CD8-positive, alpha-beta memory T cell (primary cell): ENCODE measurements at regions of chr19 and their contacts with region 1.

Region 1: GRCh38 chr19:18251587-18252369 is 22.5 kb downstream of the IQCN start:
- DNase-seq: peak; percentile 66 to 85 (median 72)
- H3K4me3 ChIP-seq: no peak overlapping the region
- H3K4me3 Mint-ChIP-seq: no peak overlapping the region
- H3K27ac ChIP-seq: no peak overlapping the region
- H3K27ac Mint-ChIP-seq: no peak overlapping the region
- H3K4me1 ChIP-seq: no peaks in the 10 kb centered on the region
- H3K4me1 Mint-ChIP-seq: peaks cover 0 to 1% (median 0%) of the 10 kb centered on the region in 3 donors
- H3K27me3 ChIP-seq: peaks cover 8% of the 10 kb centered on the region
- H3K27me3 Mint-ChIP-seq: peaks cover 14 to 25% of the 10 kb centered on the region in 2 donors

Region 2: DNA sequence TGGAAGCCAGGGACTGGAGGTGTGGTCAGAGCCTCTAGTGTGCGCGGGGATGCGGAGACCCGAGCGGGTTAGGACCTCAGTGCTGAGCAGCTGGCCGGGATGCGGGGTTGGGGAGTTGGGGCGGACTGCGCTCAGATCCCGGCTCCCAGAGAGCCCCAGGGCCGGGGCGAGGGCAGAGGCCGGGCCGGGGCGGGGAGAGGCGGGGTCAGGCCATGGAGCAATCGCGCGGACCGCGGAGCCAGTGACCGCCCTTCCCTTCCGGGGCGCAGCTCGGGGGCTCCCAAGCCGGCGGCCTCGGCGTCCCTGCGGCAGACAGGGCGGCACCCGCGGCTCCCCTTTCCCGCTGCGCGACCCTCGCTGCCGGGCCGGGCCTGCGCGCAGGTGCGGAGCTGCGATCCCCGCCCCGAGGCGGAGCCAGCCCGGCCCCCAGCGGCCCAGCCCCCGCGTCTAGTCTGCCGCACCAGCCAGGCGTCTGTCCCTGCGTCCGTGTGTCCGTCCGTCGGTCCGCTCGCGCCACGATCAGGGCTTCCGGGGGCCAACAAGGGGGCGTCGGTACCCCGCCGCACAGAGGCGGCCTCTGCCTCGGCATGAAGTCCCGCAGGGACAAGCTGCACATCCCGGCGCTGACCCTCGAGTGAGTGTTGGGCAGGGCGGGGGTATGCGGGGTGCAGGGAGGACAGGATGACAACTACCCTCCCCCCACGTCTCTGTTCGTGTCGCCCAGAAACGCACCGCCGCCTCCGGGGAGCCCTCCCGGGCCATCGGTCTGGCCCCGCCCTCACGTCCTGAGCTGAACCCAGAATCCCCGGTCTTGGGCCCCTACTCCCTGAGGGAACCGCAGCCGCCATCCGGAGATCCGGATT is 141.8 kb before region 1 on chr19:
- CTCF ChIA-PET with region 1: interaction called, 14 read pairs
- POLR2A ChIA-PET with region 1: no interaction called
- DNase-seq: peak; percentile 31 to 68 (median 46)
- H3K4me3 ChIP-seq: peak overlapping the region; percentile 61
- H3K4me3 Mint-ChIP-seq: peak overlapping the region; percentile 73 to 93 (median 86)
- H3K27ac ChIP-seq: peak overlapping the region; percentile 51
- H3K27ac Mint-ChIP-seq: peak overlapping the region in 5 of 8 donors; percentile 59 to 92 (median 89)
- H3K4me1 ChIP-seq: peaks cover 13% of the 10 kb centered on the region
- H3K4me1 Mint-ChIP-seq: peaks cover 16 to 30% (median 18%) of the 10 kb centered on the region in 3 donors
- H3K27me3 ChIP-seq: no peaks in the 10 kb centered on the region
- H3K27me3 Mint-ChIP-seq: no peaks in the 10 kb centered on the region

Region 3: DNA sequence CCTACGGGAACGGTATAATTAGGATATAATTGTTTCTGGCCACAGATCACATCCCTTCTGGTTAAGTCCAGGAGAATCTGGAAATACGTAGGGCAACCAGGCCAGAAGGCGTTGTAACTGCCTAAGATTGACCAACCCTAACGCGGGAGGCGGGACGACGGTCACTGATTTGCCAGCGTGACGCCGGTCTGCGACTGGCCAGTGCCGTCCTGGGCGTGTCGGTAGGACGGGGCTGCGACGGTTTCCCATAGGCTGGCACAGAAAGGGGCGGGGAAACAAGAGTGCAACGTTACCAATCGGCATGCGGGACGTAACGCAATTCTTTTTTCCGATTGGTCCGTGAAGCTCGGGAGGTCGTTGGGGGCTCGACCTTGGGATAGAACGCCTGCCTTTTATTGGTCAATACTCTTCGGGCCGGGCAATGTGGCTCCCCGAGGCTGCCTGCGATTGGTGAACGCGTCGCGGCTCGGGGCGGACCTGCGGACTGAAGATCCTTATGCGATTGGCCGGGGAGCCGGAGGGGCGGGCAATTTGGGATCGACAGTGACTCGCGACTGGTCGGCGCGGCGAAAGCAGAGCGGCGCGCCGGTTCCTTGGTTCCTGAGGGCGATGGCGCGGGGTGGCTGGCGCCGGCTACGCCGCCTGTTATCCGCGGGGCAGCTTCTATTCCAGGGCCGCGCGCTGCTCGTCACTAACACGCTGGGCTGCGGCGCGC is 58.9 kb before region 1 on chr19 and contains the start of gene MPV17L2:
- CTCF ChIA-PET with region 1: interaction called, 49 read pairs
- POLR2A ChIA-PET with region 1: interaction called, 8 read pairs
- DNase-seq: peak; percentile 98 to 99 (median 99)
- H3K4me3 ChIP-seq: peak within 1 kb of the TSS; percentile 74
- H3K4me3 Mint-ChIP-seq: peak within 1 kb of the TSS; percentile 82 to 95 (median 89)
- H3K27ac ChIP-seq: peak within 1 kb of the TSS; percentile 71
- H3K27ac Mint-ChIP-seq: peak within 1 kb of the TSS; percentile 76 to 98 (median 96)
- H3K4me1 ChIP-seq: peaks cover 16% of the 10 kb centered on the region
- H3K4me1 Mint-ChIP-seq: peaks cover 21 to 28% (median 22%) of the 10 kb centered on the region in 3 donors
- H3K27me3 ChIP-seq: no peaks in the 10 kb centered on the region
- H3K27me3 Mint-ChIP-seq: peaks cover 0 to 3% of the 10 kb centered on the region in 2 donors
- total RNA-seq, gene MPV17L2: 24.2 to 24.6 TPM

Region 4: GRCh38 chr19:18203863-18204393 is 47.9 kb before region 1 on chr19 and contains the start of gene RAB3A:
- CTCF ChIA-PET with region 1: interaction called, 116 read pairs
- POLR2A ChIA-PET with region 1: interaction called, 3 read pairs
- DNase-seq: peak; percentile 99 to 100 (median 99)
- H3K4me3 ChIP-seq: peak within 1 kb of the TSS; percentile 94
- H3K4me3 Mint-ChIP-seq: peak within 1 kb of the TSS; percentile 93 to 98 (median 96)
- H3K27ac ChIP-seq: peak within 1 kb of the TSS; percentile 78
- H3K27ac Mint-ChIP-seq: peak within 1 kb of the TSS; percentile 81 to 99 (median 97)
- H3K4me1 ChIP-seq: peaks cover 17% of the 10 kb centered on the region
- H3K4me1 Mint-ChIP-seq: peaks cover 16 to 36% (median 22%) of the 10 kb centered on the region in 3 donors
- H3K27me3 ChIP-seq: peaks cover 5% of the 10 kb centered on the region
- H3K27me3 Mint-ChIP-seq: peaks cover 3 to 6% of the 10 kb centered on the region in 2 donors
- total RNA-seq, gene RAB3A: 2.9 to 3.8 TPM

Region 5: DNA sequence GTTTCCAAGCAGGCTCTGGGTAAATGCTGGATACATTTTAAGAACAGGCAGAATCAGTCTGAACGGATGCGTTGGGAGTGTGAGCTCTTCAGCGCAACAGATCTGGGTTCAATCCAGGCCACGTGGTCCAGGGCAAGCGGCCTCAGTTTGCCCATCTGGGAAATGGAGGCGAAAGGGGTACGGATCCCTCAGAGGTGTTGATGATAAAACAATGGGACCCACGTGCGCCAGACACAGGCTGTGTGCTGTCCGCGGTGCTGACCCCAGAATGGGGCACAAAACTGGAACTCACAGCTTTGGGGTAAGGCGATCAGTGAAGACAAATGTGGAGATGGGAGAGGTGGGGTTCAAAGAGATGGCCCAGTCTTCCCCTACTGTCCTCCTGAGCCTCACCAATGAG is 12.5 kb before region 1 on chr19:
- CTCF ChIA-PET with region 1: interaction called, 15 read pairs
- POLR2A ChIA-PET with region 1: no interaction called
- DNase-seq: no peak
- H3K4me3 ChIP-seq: no peak overlapping the region
- H3K4me3 Mint-ChIP-seq: no peak overlapping the region
- H3K27ac ChIP-seq: no peak overlapping the region
- H3K27ac Mint-ChIP-seq: no peak overlapping the region
- H3K4me1 ChIP-seq: no peaks in the 10 kb centered on the region
- H3K4me1 Mint-ChIP-seq: no peaks in the 10 kb centered on the region
- H3K27me3 ChIP-seq: no peaks in the 10 kb centered on the region
- H3K27me3 Mint-ChIP-seq: peaks cover 19 to 32% of the 10 kb centered on the region in 2 donors

Region 6: DNA sequence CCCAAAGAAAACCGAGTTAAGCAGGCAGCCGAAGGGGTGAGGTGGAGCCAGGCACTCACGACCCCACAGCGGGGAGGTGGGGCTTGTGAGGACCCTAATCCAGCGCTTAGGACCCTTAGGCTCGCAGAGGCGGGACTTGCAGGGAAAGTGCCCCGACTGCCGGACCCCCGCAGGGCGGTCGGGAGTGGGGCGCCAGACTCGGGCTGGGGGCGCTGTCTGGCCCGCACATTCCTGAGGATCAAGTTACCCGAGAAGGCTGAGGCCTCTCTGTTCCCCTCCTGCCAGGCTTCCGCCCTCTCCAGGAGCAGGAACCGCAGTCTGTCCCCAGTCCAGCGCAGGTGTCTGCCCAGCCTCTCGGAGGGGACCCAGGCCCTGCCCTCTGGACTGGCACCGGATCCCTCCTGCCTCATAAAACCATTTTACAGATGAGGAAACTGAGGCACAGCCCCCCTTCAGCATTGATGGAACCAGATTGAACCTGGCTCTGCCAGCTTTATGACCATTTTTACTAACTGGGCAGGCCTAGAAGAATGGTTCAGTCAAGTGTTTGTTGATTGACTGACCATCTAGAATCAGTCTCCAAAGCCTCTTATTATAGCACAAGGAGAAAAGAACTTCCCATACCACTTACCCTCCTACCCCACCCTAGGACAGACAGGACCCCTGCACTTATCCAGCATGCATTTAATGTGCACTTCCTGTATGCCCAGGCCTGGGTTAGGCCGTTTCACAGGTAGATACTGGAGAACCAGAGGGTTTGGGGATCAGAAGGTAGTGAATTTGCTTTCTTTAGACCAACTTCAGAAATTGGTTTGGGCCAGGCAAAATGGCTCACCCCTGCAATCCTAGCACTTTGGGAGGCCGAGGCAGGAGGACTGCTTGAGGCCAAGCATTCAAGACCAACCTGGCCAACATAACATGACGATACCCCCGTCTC is 36.3 kb after region 1 on chr19:
- CTCF ChIA-PET with region 1: no interaction called
- POLR2A ChIA-PET with region 1: no interaction called
- DNase-seq: no peak
- H3K4me3 ChIP-seq: no peak overlapping the region
- H3K4me3 Mint-ChIP-seq: no peak overlapping the region
- H3K27ac ChIP-seq: no peak overlapping the region
- H3K27ac Mint-ChIP-seq: peak overlapping the region in 3 of 8 donors; percentile 23 to 96 (median 89)
- H3K4me1 ChIP-seq: peaks cover 44% of the 10 kb centered on the region
- H3K4me1 Mint-ChIP-seq: peaks cover 41 to 63% (median 55%) of the 10 kb centered on the region in 3 donors
- H3K27me3 ChIP-seq: no peaks in the 10 kb centered on the region
- H3K27me3 Mint-ChIP-seq: peaks cover 0 to 1% of the 10 kb centered on the region in 2 donors